ENCODE measurements at regions of chr1 and their contacts with region 1.

Region 1: DNA sequence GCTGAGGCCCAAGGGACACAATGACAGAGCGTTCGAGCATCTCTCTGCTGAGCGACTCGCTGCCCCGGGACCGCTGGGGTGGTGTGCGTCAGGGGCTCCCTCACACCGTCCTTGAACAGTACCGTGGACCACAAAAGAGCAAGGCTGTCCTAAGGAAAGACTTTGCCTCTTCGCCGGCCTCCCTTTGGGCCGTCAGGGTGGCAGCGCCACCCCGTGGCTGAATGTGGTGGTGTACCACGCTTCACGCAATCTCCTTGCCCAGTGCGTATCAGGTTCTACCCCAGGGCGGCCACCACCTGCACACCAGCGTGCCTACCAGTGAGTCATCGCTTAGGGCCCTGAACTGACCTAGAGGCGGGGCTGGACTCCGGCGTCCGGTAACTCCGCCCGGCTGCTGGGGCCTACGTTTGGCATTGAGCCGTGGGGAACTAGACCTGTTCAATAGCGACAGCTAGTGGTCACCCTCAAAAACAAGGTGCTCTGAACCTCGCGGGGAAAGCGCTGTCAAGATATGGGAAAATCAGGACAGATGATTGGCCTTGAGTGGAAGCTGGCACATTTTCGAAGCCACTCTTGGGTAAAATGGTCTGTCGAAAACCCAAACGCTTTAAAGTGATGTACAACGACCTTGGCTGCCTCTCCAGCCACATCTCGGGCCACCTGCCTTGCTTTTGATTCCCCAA is 8.1 kb upstream of the TRAF3IP3 start:
- DNase-seq: peak; percentile 96

Region 2: DNA sequence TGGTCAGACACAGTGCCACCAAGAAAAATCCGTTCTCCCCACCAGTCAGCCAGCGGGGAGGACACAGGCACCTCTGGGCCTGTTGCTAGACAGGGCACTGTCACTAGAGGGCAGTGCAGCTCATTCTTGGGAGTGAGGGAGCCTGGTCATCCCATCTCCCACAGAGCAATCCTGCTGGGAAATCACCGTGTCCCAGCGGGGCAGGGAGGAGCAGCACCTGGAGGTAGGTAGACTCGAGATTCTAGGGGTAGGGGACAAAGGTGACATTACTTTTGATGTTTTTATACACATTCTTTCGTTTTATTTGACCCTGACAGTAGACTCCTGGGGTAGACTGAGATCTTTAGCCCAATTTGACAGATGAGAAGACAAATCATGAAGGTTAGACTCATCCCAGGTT is 170.9 kb before region 1 on chr1:
- intact Hi-C with region 1: loop called in 1 of 2 experiments (anchors 5 kb)
- DNase-seq: peak; percentile 92